Upper lobe of right lung (tissue), 1 donor: ENCODE measurements at regions of chr10 and their contacts with region 1.

Region 1: DNA sequence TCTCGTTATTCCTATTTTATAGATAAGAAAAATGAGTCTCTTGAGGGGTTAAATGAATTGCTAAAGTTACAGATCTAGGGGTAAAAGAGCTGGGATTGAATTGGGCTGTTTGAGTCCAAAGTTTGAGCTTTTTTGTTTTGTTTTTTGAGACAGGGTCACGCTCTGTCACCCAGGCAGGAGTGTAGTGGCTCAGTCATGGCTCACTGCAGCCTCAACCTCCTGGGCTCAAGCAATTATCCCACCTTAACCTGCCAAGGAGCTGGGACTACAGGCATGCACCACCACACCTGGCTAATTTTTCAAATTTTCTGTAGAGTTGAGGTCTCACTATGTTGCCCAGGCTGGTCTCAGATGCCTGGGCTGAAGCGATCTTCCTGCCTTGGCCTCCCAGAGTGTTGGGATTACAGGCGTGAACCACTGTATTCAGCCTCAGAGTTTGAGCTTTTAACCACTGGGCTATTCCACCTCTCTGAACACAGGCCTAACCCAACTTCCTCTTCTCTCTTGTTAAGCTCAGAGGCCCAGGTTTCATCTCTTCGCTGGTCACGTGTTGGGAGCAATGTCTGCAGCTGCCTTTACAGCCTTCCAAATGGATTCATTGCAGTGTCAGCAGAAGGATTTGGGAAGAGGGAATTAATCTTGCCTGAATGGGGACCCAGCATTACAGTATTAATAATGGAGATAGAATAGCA is 8.0 kb downstream of the SUFU start:
- DNase-seq: no peak
- ATAC-seq: peak; percentile 71
- H3K4me3 ChIP-seq: no peak overlapping the region
- H3K27ac ChIP-seq: no peak overlapping the region
- H3K4me1 ChIP-seq: peaks cover 29% of the 10 kb centered on the region
- H3K27me3 ChIP-seq: no peaks in the 10 kb centered on the region
- CTCF ChIP-seq: no peak

Region 2: DNA sequence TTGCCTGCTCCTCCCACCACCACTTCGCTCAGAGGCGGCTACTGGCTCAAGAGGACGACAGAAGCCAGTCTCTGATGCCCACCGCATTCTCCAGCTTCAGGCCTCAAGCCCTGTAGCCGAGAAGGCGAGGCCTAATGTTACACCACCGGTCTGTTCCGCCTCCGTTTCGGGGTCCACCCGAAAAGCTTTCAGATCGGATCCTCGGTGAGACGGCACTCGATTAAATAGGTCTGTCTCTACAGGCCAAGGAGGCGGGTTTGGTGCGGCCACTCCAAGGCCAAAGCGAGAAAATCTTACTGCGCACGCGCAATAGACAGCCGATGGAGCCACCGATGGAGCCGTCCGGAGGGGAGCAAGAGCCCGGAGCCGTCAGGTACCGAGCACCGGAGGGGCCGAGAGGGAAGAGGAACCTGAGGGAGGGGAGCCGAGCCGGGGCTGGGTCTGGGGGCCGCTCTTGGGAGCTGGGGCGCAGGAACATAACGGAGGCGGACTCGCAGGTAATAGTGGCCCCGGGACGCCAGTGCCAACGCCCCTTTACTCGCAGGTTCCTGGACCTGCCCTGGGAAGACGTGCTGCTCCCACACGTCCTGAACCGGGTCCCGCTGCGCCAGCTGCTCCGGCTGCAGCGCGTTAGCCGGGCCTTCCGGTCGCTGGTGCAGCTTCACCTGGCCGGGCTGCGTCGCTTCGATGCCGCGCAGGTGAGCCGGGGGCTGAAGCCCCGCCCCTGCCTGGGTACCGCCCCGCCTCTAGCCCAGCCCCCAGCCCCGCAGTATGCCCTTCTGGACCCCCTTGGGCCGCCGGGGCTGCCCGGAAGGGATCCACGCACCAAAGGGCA is 90.7 kb before region 1 on chr10 and contains the start of gene FBXL15:
- intact Hi-C with region 1: no loop called
- DNase-seq: peak; percentile 97
- ATAC-seq: peak; percentile 83
- H3K4me3 ChIP-seq: peak within 1 kb of the TSS; percentile 81
- H3K27ac ChIP-seq: peak within 1 kb of the TSS; percentile 88
- H3K4me1 ChIP-seq: peaks cover 32% of the 10 kb centered on the region
- H3K27me3 ChIP-seq: peaks cover 23% of the 10 kb centered on the region
- CTCF ChIP-seq: no peak
- total RNA-seq, gene FBXL15: 16.0 TPM

Region 3: DNA sequence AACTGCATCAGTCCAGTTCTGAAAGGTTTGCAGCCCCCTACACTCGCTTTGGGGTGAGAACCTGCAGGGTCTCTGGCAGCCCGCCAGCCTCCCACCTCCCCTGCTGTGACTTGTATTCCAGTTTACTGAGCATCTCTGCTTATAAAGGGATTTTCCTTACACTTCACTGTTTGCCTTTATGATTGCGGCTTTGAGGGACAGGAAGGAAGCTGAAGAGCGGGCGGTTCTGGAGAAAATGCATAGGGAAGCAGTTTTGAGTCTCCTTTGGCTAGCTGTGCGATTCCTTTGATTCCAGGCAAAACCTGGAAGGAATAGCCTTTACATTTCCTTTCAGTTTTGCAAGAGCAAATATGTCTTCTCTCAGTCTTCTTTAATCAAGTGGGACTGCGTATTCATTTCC is 67.6 kb after region 1 on chr10:
- intact Hi-C with region 1: loop called (anchors 10 kb)
- DNase-seq: no peak
- ATAC-seq: no peak
- H3K4me3 ChIP-seq: no peak overlapping the region
- H3K27ac ChIP-seq: peak overlapping the region; percentile 44
- H3K4me1 ChIP-seq: peaks cover 31% of the 10 kb centered on the region
- H3K27me3 ChIP-seq: no peaks in the 10 kb centered on the region
- CTCF ChIP-seq: no peak

Region 4: DNA sequence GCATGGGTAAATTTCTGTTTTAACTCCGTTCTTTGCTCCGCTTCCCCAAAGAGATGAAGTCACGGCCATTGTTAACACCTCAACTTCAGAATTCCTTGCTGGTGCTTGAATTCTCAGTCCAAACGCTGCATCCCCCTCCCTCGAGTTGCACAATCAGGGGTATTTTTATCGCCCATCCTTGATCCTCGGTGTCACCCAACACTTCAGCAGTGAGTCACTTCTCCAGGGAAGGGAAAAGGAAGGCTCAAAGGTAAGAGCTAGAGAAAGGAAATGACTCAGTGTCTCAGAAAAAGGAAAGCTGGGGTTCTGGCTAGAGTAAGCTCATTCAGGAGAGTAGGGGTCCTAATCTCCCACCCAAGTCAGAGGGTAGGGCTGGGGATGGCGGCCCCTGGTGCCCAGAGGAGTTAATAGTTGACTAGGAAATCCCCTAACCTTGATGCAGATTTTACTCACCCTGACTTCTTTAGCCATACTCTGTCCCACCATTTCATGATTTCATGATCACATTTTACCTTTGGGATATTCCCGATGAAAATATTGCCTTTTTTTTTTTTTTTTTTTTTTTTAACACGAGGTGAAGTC is 92.7 kb after region 1 on chr10:
- intact Hi-C with region 1: no loop called
- DNase-seq: no peak
- ATAC-seq: no peak
- H3K4me3 ChIP-seq: no peak overlapping the region
- H3K27ac ChIP-seq: peak overlapping the region; percentile 56
- H3K4me1 ChIP-seq: peaks cover 44% of the 10 kb centered on the region
- H3K27me3 ChIP-seq: no peaks in the 10 kb centered on the region
- CTCF ChIP-seq: no peak